Common myeloid progenitor, CD34-positive (primary cell): ENCODE measurements at regions of chr1 and their contacts with region 1.

Region 1: GRCh38 chr1:116485071-116485735 is 85.6 kb downstream of the CD58 start:
- DNase-seq: peak; percentile 82 to 91 (median 86)
- H3K4me3 ChIP-seq: no peak overlapping the region
- H3K27ac ChIP-seq: no peak overlapping the region
- H3K4me1 ChIP-seq: peaks cover 2 to 8% (median 5%) of the 10 kb centered on the region in 4 experiments
- H3K27me3 ChIP-seq: no peaks in the 10 kb centered on the region

Region 2: DNA sequence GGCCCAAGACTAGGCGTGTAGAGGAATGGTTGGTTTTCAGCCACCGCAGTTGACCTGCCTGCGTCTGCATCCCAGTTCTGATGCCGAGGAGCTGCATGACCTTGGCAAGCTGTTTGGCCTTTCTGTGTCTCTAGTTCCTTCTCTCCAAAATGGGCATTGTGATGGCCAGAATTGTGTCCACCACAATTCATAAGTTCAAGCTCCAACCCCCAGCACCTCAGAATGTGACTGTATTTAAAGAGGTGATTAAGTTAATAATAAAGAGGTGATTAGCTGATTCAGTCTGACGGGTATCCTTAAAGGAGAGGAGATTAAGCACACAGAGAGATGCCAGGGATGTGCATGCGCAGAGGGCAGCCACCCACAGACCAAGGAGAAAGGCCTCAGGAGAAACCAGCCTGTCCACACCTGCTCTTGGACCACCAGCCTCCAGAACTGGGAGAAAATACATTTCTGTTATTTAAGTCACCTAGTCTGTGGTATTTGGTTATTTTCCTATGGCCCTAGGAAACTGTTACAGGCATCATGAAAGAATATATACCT is 345.5 kb before region 1 on chr1:
- CTCF ChIA-PET with region 1: interaction called, 190 read pairs
- POLR2A ChIA-PET with region 1: no interaction called
- DNase-seq: no peak
- H3K4me3 ChIP-seq: no peak overlapping the region
- H3K27ac ChIP-seq: no peak overlapping the region
- H3K4me1 ChIP-seq: peaks cover 0 to 2% (median 0%) of the 10 kb centered on the region in 4 experiments
- H3K27me3 ChIP-seq: no peaks in the 10 kb centered on the region

Region 3: DNA sequence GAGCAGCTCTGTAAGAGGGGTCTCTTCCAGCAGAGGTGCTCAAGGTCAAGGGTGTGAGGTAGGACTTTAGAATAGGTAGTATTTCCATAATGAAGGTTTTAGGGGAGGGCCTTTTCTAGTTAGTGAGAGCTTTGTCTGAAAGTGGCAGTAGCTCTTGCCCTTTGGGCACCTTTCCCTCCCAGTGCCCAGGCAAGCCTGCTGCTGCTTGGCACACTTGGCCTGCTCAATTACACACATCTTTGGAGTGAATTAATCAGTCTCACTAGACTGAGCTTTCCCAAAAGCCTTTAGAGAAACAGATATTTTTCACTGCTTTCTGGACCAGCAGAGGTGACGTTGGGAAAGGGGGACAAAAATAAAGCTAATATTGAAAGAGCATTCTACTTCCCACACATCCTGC is 326.0 kb before region 1 on chr1:
- CTCF ChIA-PET with region 1: interaction called, 123 read pairs
- POLR2A ChIA-PET with region 1: no interaction called
- DNase-seq: no peak
- H3K4me3 ChIP-seq: no peak overlapping the region
- H3K27ac ChIP-seq: no peak overlapping the region
- H3K4me1 ChIP-seq: no peaks in the 10 kb centered on the region
- H3K27me3 ChIP-seq: peaks cover 0 to 3% (median 0%) of the 10 kb centered on the region in 5 experiments

Region 4: GRCh38 chr1:116462722-116463121 is 22.5 kb before region 1 on chr1:
- CTCF ChIA-PET with region 1: interaction called, 11 read pairs
- POLR2A ChIA-PET with region 1: no interaction called
- DNase-seq: no peak
- H3K4me3 ChIP-seq: no peak overlapping the region
- H3K27ac ChIP-seq: no peak overlapping the region
- H3K4me1 ChIP-seq: no peaks in the 10 kb centered on the region
- H3K27me3 ChIP-seq: peaks cover 0 to 5% (median 0%) of the 10 kb centered on the region in 5 experiments

Region 5: GRCh38 chr1:116498789-116499628 is 13.8 kb after region 1 on chr1:
- CTCF ChIA-PET with region 1: interaction called, 113 read pairs
- POLR2A ChIA-PET with region 1: no interaction called
- DNase-seq: peak; percentile 63 to 68 (median 66)
- H3K4me3 ChIP-seq: no peak overlapping the region
- H3K27ac ChIP-seq: no peak overlapping the region
- H3K4me1 ChIP-seq: peaks cover 9 to 53% (median 29%) of the 10 kb centered on the region in 4 experiments
- H3K27me3 ChIP-seq: no peaks in the 10 kb centered on the region